ENCODE measurements at regions of chr12 and their contacts with region 1.

Region 1: DNA sequence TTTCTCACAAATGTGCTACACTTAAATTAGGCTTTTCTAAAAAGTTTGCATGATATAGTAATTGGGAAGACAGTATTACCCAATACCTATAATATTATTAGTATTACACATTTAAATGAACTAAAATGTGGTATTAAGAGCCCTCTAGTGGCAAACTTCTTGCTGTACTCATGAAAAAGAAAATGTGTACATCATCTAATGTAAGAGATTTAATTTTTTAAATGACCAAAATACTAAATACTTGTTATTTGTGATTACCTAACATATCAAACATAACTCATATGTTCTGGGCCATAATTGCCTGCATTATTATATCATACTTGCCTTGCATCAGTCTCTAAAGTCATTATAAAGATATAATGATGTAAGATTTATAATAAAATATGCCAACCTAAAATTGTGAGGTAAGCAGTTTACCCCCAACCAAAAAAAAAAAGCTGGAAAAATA is 64.2 kb downstream of the DNAI7 start:
- DNase-seq: peak; percentile 24
- ATAC-seq: peak; percentile 73
- H3K4me3 ChIP-seq: no peak overlapping the region
- H3K27ac ChIP-seq: no peak overlapping the region
- H3K4me1 ChIP-seq: no peaks in the 10 kb centered on the region
- H3K27me3 ChIP-seq: 0 out of 2 replicates have a peak, but pooled peaks cover 4% of the 10 kb centered on the region
- CTCF ChIP-seq: peak; percentile 27; the same call in 1 of the 2 replicates

Region 2: GRCh38 chr12:24852420-24852819 is 278.3 kb before region 1 on chr12:
- CTCF ChIA-PET with region 1: no interaction called
- POLR2A ChIA-PET with region 1: no interaction called
- in situ Hi-C with region 1: no loop called
- intact Hi-C with region 1: loop called (anchors 10 kb)
- DNase-seq: no peak
- ATAC-seq: no peak
- H3K4me3 ChIP-seq: no peak overlapping the region
- H3K27ac ChIP-seq: no peak overlapping the region
- H3K4me1 ChIP-seq: no peaks in the 10 kb centered on the region
- H3K27me3 ChIP-seq: peaks cover 8% of the 10 kb centered on the region; the same call in 1 of the 2 replicates
- CTCF ChIP-seq: peak; percentile 61; the same call in 1 of the 2 replicates